Sigmoid colon (tissue), 7 donors: ENCODE measurements at regions of chr17 and their contacts with region 1.

Region 1: DNA sequence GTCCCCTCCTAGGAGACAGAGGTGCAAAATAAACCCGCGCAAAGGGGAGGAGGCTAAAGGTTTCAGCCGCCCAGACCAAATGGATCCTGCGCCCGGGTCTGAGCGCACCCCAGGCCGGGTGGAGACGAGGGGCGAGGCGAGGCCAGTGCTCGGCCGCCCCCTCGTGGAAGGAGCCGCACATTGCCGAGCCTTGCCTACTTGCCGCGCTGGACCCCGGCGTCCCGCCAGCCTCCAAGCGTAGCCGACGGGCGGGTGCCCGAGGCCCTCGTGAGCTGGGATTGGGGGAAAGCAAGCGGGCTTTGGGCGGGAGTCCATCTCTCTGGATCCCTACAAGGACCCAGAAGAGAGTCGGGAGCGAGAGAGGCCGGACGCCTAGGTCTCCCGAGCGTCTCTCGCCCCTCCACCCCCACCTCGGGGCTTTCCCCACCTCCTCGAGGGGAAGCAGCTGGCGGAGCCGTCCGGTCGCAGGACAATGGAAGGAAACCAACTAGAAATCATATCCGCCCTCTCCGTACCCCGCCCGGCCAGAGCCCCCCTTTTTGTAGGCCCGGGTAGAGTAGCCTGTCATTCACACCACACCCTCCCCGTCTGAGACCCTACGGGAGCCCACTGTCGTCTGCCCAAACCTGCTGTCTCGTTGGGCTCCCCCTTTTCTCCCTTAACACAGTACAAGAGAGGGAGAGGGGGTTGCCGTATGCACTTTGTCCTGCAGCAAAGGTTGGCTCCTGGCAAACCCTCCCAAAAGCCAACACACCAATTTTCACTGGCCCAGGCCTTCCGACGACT is 664 bp upstream of the BCL6B start:
- DNase-seq: peak; percentile 91
- H3K4me3 ChIP-seq: peak overlapping the region in 3 of 4 donors; percentile 9 to 26 (median 18)
- H3K27ac ChIP-seq: peak overlapping the region; percentile 64 to 71 (median 68)
- H3K4me1 ChIP-seq: peaks cover 0 to 48% (median 45%) of the 10 kb centered on the region in 4 donors
- H3K27me3 ChIP-seq: peaks cover 9 to 30% (median 18%) of the 10 kb centered on the region in 3 donors
- CTCF ChIP-seq: peak; percentile 81 to 98 (median 88)
- EP300 ChIP-seq: no peak
- POLR2A ChIP-seq: no peak

Region 2: GRCh38 chr17:6913608-6914443 is 108.4 kb before region 1 on chr17:
- intact Hi-C with region 1: loop called (anchors 5 kb)
- DNase-seq: peak; percentile 79
- H3K4me3 ChIP-seq: peak overlapping the region in 2 of 4 donors; percentile 6 to 23
- H3K27ac ChIP-seq: no peak overlapping the region
- H3K4me1 ChIP-seq: peaks cover 0 to 10% (median 3%) of the 10 kb centered on the region in 4 donors
- H3K27me3 ChIP-seq: peaks cover 0 to 34% (median 6%) of the 10 kb centered on the region in 3 donors
- CTCF ChIP-seq: peak; percentile 58 to 80 (median 68)
- EP300 ChIP-seq: no peak
- POLR2A ChIP-seq: no peak